Ascending aorta (tissue), 2 donors: ENCODE measurements at regions of chr12 and their contacts with region 1.

Region 1: DNA sequence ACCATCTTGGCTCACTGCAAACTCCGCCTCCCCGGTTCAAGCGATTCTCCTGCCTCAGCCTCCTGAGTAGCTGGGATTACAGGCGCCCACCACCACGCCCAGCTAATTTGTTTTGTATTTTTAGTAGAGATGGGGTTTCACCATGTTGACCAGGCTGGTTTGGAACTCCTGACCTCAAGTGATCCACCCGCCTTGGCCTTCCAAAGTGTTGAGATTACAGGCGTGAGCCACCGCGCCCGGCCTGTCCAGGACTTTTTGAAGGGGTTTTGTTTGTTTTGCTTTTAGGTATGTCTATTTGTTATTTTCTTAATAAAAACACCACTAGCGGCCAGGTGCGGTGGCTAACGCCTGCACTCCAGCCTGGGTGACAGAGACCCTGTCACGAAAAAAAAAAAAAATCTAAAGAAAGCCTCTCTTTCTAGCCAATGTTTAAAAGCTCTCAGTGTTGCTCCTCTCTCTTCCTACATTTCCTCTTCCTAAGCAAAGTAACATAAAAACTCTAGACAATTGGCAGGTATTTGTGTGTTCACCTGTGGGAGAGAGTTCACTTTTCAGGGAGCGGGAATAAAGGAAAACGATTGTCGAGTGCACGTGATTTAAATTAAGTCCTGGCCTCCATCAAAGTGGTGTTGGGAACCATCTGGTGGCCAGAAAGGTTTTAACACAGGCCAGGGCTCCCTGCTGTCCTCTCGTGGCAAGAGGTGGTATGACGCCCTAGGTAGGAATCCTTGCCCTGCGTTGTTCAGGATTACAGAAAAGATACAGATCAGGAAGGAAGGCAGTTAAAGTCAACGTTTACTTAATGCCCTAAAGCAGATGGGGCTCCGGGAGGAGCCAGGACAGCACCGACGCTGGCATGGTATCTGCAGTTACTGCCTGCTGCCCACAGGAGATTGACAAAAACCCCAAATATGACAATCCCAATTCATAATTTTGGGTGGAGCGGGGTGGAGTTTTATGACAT is 36.2 kb upstream of the ATP23 start:
- DNase-seq: peak in 1 of 2 donors; percentile 92
- H3K4me3 ChIP-seq: peak overlapping the region in 1 of 2 donors; percentile 46
- H3K27ac ChIP-seq: no peak overlapping the region
- H3K4me1 ChIP-seq: peaks cover 0 to 5% of the 10 kb centered on the region in 2 donors
- H3K27me3 ChIP-seq: no peaks in the 10 kb centered on the region
- CTCF ChIP-seq: peak; percentile 100

Region 2: DNA sequence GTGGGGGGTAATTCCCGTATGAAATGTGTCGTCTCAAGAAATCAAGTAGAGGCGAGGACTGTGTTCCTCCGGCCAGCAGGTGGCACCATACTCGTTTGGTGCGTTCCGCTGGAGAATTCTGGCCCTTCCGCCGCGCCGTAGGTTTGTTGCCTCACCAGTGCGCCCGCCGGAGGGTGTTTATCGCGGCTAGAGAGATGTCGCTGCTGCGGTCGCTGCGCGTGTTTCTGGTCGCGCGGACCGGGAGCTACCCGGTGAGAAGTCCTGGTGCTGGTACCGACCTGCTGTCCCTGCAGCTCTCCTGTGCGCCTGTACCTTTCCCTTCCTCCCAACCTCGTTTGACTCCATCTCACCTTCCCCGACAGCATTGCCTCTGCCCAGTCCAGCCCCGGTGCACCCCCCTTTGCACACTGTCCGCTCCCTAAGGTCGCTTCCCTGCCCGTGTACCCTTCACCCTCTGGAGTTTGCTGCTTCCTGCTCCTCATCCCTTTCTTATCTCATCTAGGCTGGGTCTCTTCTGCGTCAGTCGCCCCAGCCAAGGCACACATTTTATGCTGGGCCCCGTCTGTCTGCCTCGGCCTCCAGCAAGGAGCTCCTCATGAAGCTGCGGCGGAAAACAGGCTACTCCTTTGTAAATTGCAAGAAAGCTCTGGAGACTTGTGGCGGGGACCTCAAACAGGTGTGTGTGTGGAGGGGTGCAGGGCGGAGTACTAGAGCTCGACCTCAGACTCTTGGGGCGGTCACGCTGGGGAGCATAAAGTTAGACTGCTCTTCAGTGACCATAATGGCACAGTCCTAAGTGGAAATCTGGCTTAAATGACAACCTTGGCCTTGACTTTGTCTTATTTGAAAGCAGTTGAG is 122.3 kb before region 1 on chr12 and contains the start of gene TSFM:
- intact Hi-C with region 1: loop called (anchors 1 kb)
- DNase-seq: peak; percentile 75 to 97
- H3K4me3 ChIP-seq: peak within 1 kb of the TSS; percentile 77 to 97
- H3K27ac ChIP-seq: peak within 1 kb of the TSS; percentile 48 to 70
- H3K4me1 ChIP-seq: peaks cover 7 to 14% of the 10 kb centered on the region in 2 donors
- H3K27me3 ChIP-seq: no peaks in the 10 kb centered on the region
- CTCF ChIP-seq: peak; percentile 89 to 93 (median 91)
- total RNA-seq, gene TSFM: 46.8 TPM

Region 3: GRCh38 chr12:57803319-57803893 is 101.7 kb before region 1 on chr12:
- intact Hi-C with region 1: loop called (anchors 1 kb)
- DNase-seq: no peak
- H3K4me3 ChIP-seq: no peak overlapping the region
- H3K27ac ChIP-seq: peak overlapping the region; percentile 25 to 40
- H3K4me1 ChIP-seq: peaks cover 3 to 4% of the 10 kb centered on the region in 2 donors
- H3K27me3 ChIP-seq: no peaks in the 10 kb centered on the region
- CTCF ChIP-seq: peak; percentile 76 to 79 (median 78)

Region 4: GRCh38 chr12:57836442-57837375 is 68.4 kb before region 1 on chr12:
- intact Hi-C with region 1: loop called (anchors 1 kb)
- DNase-seq: peak in 1 of 2 donors; percentile 85
- H3K4me3 ChIP-seq: peak overlapping the region; percentile 31 to 94
- H3K27ac ChIP-seq: peak overlapping the region; percentile 73 to 100
- H3K4me1 ChIP-seq: peaks cover 64 to 99% of the 10 kb centered on the region in 2 donors
- H3K27me3 ChIP-seq: no peaks in the 10 kb centered on the region
- CTCF ChIP-seq: no peak

Region 5: DNA sequence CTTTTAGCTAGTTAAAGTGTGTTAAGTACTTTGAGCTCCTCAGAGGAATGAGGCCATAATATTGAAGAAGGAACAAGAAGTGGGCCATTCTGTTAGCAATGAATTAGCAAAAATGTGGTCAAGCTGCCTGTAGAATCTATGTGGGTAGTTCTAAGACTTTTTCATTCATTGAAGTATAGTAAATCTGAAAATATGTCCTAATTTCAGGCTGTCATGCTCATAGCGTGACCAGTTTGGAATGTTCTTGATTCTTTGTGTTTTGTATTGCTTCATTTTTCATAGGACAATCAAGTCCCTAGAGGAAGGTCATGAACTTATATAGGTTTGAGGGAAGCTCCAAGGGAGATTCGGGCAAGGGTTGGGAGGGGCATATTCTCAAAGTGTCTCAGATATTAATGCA is 47.6 kb after region 1 on chr12:
- intact Hi-C with region 1: no loop called
- DNase-seq: no peak
- H3K4me3 ChIP-seq: no peak overlapping the region
- H3K27ac ChIP-seq: no peak overlapping the region
- H3K4me1 ChIP-seq: no peaks in the 10 kb centered on the region
- H3K27me3 ChIP-seq: no peaks in the 10 kb centered on the region
- CTCF ChIP-seq: no peak